MCF 10A (cell line): ENCODE measurements at regions of chr9 and their contacts with region 1.

Region 1: GRCh38 chr9:131762356-131762932 is 22.6 kb upstream of the RAPGEF1 start:
- DNase-seq: peak; percentile 58
- H3K4me3 Mint-ChIP-seq: no peak overlapping the region
- H3K27ac Mint-ChIP-seq: no peak overlapping the region
- H3K4me1 Mint-ChIP-seq: no peaks in the 10 kb centered on the region
- H3K27me3 Mint-ChIP-seq: peaks cover 51% of the 10 kb centered on the region
- CTCF ChIP-seq: peak; percentile 95

Region 2: GRCh38 chr9:131815971-131816873 is 53.8 kb after region 1 on chr9:
- CTCF ChIA-PET with region 1: no interaction called
- POLR2A ChIA-PET with region 1: no interaction called
- intact Hi-C with region 1: no loop called
- DNase-seq: peak; percentile 19
- H3K4me3 Mint-ChIP-seq: peak overlapping the region; percentile 47
- H3K27ac Mint-ChIP-seq: no peak overlapping the region
- H3K4me1 Mint-ChIP-seq: peaks cover 4% of the 10 kb centered on the region
- H3K27me3 Mint-ChIP-seq: peaks cover 69% of the 10 kb centered on the region
- CTCF ChIP-seq: no peak

Region 3: GRCh38 chr9:131954299-131954698 is 191.9 kb after region 1 on chr9:
- CTCF ChIA-PET with region 1: no interaction called
- POLR2A ChIA-PET with region 1: no interaction called
- intact Hi-C with region 1: loop called (anchors 2 kb)
- DNase-seq: peak; percentile 13
- H3K4me3 Mint-ChIP-seq: no peak overlapping the region
- H3K27ac Mint-ChIP-seq: no peak overlapping the region
- H3K4me1 Mint-ChIP-seq: no peaks in the 10 kb centered on the region
- H3K27me3 Mint-ChIP-seq: no peaks in the 10 kb centered on the region
- CTCF ChIP-seq: peak; percentile 32

Region 4: GRCh38 chr9:132169672-132170392 is 407.4 kb after region 1 on chr9:
- CTCF ChIA-PET with region 1: interaction called, 5 read pairs
- POLR2A ChIA-PET with region 1: no interaction called
- intact Hi-C with region 1: loop called (anchors 2 kb)
- DNase-seq: peak; percentile 60
- H3K4me3 Mint-ChIP-seq: no peak overlapping the region
- H3K27ac Mint-ChIP-seq: no peak overlapping the region
- H3K4me1 Mint-ChIP-seq: no peaks in the 10 kb centered on the region
- H3K27me3 Mint-ChIP-seq: peaks cover 91% of the 10 kb centered on the region
- CTCF ChIP-seq: peak; percentile 90

Region 5: DNA sequence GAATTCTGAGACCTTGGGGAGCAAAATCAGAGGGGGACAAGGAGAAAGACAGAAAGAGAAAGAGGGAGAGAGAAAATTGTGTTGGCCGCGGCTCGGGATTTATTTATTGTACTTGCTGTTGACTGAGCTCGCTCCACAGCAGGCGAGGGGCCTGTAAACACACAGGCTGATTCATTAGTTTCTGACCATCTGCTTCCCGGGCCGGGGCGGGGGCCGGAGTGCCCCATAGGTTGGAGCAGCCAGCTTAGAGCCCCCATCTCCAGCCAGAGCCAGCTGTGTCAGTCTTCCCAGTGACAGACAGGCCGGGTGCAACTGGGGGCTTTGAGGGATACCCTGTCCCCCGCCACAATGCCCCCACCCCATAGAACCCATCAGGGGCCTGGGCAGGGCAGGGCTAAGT is 430.3 kb after region 1 on chr9:
- CTCF ChIA-PET with region 1: no interaction called
- POLR2A ChIA-PET with region 1: no interaction called
- intact Hi-C with region 1: no loop called
- DNase-seq: no peak
- H3K4me3 Mint-ChIP-seq: no peak overlapping the region
- H3K27ac Mint-ChIP-seq: no peak overlapping the region
- H3K4me1 Mint-ChIP-seq: no peaks in the 10 kb centered on the region
- H3K27me3 Mint-ChIP-seq: peaks cover 32% of the 10 kb centered on the region
- CTCF ChIP-seq: no peak

Region 6: DNA sequence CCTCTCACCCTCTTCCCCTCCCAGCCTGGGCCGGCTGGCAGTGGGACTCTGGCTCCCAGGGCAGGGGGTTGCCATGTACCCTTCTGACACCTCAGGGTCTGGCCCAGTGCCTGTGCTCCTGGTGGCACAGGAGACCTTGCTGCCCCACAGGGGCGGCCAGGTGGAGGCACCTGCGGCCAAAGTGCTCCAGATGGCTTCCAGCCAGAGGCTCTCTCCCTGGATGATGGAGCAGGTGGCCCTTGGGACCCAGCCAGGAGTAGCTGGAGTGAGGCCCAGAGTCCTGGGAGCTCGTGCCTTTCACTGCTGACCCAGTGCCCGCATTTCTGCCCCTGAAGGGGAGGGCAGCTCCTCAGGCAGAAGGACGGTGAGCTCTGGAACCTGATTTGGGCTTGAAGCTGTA is 486.7 kb after region 1 on chr9:
- CTCF ChIA-PET with region 1: interaction called, 42 read pairs
- POLR2A ChIA-PET with region 1: no interaction called
- intact Hi-C with region 1: loop called (anchors 1 kb)
- DNase-seq: peak; percentile 36
- H3K4me3 Mint-ChIP-seq: no peak overlapping the region
- H3K27ac Mint-ChIP-seq: no peak overlapping the region
- H3K4me1 Mint-ChIP-seq: no peaks in the 10 kb centered on the region
- H3K27me3 Mint-ChIP-seq: peaks cover 2% of the 10 kb centered on the region
- CTCF ChIP-seq: no peak

Region 7: GRCh38 chr9:132268725-132269352 is 506.4 kb after region 1 on chr9:
- CTCF ChIA-PET with region 1: interaction called, 37 read pairs
- POLR2A ChIA-PET with region 1: no interaction called
- intact Hi-C with region 1: no loop called
- DNase-seq: peak; percentile 55
- H3K4me3 Mint-ChIP-seq: no peak overlapping the region
- H3K27ac Mint-ChIP-seq: peak overlapping the region; percentile 49
- H3K4me1 Mint-ChIP-seq: no peaks in the 10 kb centered on the region
- H3K27me3 Mint-ChIP-seq: no peaks in the 10 kb centered on the region
- CTCF ChIP-seq: peak; percentile 47